Heart left ventricle (tissue), 16 donors: ENCODE measurements at regions of chr19 and their contacts with region 1.

Region 1: DNA sequence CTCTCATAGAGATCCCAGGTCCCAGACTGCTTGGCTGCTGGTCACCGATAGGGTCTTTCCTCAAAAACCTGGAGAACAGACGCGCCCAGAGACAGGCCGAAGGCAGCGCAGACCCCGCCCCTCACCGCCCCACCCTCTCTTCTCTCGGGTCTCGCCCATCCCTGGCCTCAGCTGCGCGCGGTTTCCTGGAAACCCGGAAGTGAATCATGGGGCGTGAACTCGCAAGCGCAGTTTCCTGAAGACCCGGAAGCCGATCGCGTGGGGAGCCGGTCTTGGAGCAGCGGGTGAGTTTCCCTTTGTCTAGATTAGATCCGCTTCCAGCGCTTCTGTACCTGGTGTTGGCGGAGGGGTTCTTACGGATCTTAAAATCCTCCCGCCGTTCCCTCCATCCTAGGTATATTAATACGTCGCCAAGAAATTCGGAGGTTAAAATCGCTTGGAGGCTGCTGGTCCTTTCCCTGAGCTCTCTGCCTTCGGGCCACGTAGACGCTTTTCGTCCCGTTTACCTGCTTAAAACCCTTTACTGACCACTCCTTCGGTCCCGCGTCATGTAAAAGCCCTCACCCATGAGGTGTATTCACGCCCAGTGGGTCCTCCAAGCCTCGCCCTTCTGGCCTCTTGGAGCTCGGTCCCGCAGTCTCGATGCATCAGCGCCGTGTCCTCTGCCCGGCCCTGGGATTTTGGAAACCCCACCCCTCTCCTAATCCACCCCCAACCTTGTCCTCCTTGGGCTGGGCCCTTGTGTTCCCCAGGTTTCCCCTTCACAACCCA is at the start of gene ZNF578:
- DNase-seq: peak; percentile 88 to 93 (median 90)
- ATAC-seq: peak; percentile 93 to 99 (median 98)
- H3K4me3 ChIP-seq: peak within 1 kb of the TSS; percentile 51 to 89 (median 76)
- H3K27ac ChIP-seq: peak within 1 kb of the TSS in 7 of 12 donors; percentile 3 to 71 (median 39)
- H3K4me1 ChIP-seq: peaks cover 0 to 9% (median 4%) of the 10 kb centered on the region in 12 donors
- H3K27me3 ChIP-seq: peaks cover 0 to 6% (median 0%) of the 10 kb centered on the region in 9 donors
- CTCF ChIP-seq: peak in 1 of 12 donors; percentile 11
- POLR2A ChIP-seq: no peak
- total RNA-seq, gene ZNF578: 0.64 to 4.7 (median 2.1) TPM

Region 2: GRCh38 chr19:52397310-52398080 is 56.0 kb before region 1 on chr19 and contains the start of gene ZNF528:
- intact Hi-C with region 1: loop called in 3 of 10 experiments (anchors 1 to 5 kb)
- DNase-seq: peak; percentile 97 to 99 (median 98)
- ATAC-seq: peak; percentile 100
- H3K4me3 ChIP-seq: peak within 1 kb of the TSS; percentile 53 to 96 (median 78)
- H3K27ac ChIP-seq: peak within 1 kb of the TSS; percentile 35 to 84 (median 72)
- H3K4me1 ChIP-seq: peaks cover 0 to 21% (median 13%) of the 10 kb centered on the region in 12 donors
- H3K27me3 ChIP-seq: no peaks in the 10 kb centered on the region
- CTCF ChIP-seq: peak in 1 of 12 donors; percentile 4
- POLR2A ChIP-seq: peak; percentile 13 to 61
- total RNA-seq, gene ZNF528: 8.2 to 24.6 (median 18.4) TPM

Region 3: GRCh38 chr19:52473655-52474350 is 20.3 kb after region 1 on chr19:
- intact Hi-C with region 1: loop called in 1 of 10 experiments (anchors 2 kb)
- DNase-seq: no peak
- ATAC-seq: no peak
- H3K4me3 ChIP-seq: no peak overlapping the region
- H3K27ac ChIP-seq: no peak overlapping the region
- H3K4me1 ChIP-seq: no peaks in the 10 kb centered on the region
- H3K27me3 ChIP-seq: no peaks in the 10 kb centered on the region
- CTCF ChIP-seq: no peak
- POLR2A ChIP-seq: no peak